AG04450 (cell line): ENCODE measurements at regions of chr17 and their contacts with region 1.

Region 1: DNA sequence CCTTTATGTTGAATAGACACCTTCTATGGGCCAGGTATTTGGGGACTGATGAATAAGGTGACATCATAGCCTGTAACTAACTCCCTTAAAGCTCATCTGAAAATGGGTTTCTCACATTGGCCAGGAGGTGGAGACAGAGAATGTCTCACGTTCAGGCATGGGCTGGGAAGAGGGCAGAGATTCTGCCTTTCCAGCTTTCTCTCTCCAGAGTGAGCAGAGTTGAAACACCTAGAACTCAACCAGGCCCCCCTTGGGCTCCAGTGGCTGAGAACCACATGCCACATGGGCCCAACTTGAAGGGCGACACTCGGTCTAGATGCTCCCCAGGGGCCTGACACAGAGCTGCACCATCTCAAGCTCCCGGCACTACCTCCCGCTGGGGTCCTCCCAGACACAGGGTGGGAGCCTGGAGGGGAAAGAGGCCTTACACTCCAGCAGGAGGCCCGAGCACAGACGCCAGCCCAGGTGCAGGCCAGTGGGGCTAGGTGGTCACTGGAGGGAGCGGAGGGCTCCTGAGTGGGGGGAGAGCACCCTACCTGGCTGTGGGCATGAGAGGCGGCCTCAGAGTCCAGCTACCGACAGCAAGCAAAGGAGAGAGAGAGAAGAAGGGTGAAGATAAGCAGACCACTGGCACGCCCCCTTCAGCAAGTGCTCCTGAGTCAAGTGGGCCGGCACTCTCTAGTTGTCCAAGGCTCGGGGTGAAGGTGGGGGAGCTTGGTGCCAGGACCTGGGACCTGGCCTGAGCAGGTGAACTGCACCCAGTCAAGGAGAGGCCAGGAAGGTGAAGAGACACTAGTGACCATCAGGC is 55.9 kb downstream of the MYO18A start:
- DNase-seq: no peak
- H3K4me3 ChIP-seq: no peak overlapping the region
- H3K27ac ChIP-seq: peak overlapping the region; percentile 31
- H3K27me3 ChIP-seq: no peaks in the 10 kb centered on the region
- CTCF ChIP-seq: peak; percentile 83

Region 2: GRCh38 chr17:29074488-29074887 is 49.8 kb before region 1 on chr17:
- CTCF ChIA-PET with region 1: no interaction called
- POLR2A ChIA-PET with region 1: no interaction called
- DNase-seq: no peak
- H3K4me3 ChIP-seq: no peak overlapping the region
- H3K27ac ChIP-seq: no peak overlapping the region
- H3K27me3 ChIP-seq: peaks cover 11% of the 10 kb centered on the region
- CTCF ChIP-seq: no peak

Region 3: DNA sequence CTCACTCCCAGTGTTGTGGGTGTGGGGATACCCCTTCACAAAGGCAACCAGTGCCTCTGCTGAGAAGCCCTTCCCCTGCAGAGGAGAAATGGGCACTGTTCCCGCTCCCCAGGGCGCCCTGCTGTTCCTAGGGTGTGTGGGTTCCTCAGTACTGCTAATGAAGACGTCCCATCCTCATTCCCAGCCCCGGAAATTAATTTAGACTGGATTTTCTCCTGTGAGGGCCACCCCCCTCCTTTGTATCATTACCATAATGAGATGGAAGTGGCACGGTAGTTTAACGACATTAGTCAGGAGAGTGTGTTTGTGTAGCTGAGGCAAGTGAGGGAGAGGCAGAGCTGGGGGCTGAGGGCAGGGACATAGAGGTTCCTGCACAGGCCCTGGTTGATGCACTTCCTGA is 28.2 kb before region 1 on chr17:
- CTCF ChIA-PET with region 1: no interaction called
- POLR2A ChIA-PET with region 1: no interaction called
- DNase-seq: no peak
- H3K4me3 ChIP-seq: no peak overlapping the region
- H3K27ac ChIP-seq: no peak overlapping the region
- H3K27me3 ChIP-seq: no peaks in the 10 kb centered on the region
- CTCF ChIP-seq: no peak

Region 4: DNA sequence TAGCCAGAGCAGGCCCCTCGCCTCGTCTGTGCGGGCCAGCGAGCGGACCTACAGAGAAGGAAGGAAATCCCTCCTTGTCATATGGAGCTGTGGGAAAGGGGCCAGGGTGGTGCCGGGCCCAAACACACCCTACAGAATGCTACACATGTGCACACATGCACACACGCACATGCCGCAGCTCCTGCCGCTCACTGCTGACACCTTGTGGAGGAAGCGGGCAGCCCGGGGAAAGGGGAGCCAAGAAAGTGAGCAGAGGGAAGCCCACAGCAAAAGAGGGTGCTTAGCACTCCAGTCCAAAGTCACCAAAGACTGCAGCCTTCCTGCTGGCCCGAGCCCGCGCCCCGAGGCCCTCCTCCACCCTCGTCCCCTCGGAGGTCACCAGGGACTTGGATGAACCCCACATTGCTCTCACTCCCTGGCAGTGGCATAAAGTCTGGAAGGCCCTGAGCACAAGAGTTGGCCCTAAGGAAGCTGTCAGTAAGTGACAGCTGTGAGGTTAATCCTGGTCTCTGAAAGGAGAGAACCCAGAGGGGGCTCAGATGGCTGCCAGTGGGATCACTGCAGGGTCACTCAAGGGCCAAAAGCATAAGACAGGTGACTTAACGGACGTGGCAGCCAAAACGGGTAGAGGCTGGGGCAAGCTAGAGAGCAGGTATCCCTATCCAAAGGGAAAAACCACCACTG is 12.4 kb before region 1 on chr17:
- CTCF ChIA-PET with region 1: interaction called, 14 read pairs
- POLR2A ChIA-PET with region 1: no interaction called
- DNase-seq: no peak
- H3K4me3 ChIP-seq: no peak overlapping the region
- H3K27ac ChIP-seq: no peak overlapping the region
- H3K27me3 ChIP-seq: no peaks in the 10 kb centered on the region
- CTCF ChIP-seq: peak; percentile 99

Region 5: GRCh38 chr17:29140051-29140621 is 15.8 kb after region 1 on chr17:
- CTCF ChIA-PET with region 1: interaction called, 66 read pairs
- POLR2A ChIA-PET with region 1: interaction called, 9 read pairs
- DNase-seq: no peak
- H3K4me3 ChIP-seq: peak overlapping the region; percentile 53
- H3K27ac ChIP-seq: peak overlapping the region; percentile 70
- H3K27me3 ChIP-seq: no peaks in the 10 kb centered on the region
- CTCF ChIP-seq: no peak

Region 6: DNA sequence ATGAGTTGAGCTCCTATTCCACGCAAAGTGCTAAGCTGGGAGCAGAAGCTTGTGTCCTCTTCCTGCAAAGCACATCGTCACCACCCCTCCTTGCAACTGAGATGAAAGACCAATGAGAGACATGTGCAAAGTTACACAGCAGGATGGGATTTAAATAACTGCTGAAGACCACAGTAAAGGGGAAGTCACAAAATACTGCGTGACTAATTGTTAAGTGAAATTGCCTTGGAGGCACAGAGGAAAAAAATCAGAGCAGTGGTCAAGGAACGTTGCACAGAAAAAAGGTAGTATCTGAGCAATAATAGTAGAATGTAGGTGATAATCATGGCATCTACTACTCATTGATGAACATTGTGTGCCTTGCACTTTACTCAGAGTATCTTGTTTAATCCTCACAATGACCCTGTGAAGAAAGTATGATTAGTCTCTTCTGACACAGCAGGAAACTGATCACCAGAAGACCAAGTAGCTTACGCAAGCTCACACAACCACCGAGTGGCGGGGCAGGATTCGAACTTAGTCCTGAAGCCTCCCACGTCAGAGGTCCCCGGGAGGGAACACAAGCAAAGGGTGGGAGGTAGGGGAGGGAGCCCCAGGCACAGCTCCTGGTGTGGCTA is 71.3 kb after region 1 on chr17:
- CTCF ChIA-PET with region 1: no interaction called
- POLR2A ChIA-PET with region 1: no interaction called
- DNase-seq: no peak
- H3K4me3 ChIP-seq: no peak overlapping the region
- H3K27ac ChIP-seq: no peak overlapping the region
- H3K27me3 ChIP-seq: peaks cover 14% of the 10 kb centered on the region
- CTCF ChIP-seq: no peak

Region 7: DNA sequence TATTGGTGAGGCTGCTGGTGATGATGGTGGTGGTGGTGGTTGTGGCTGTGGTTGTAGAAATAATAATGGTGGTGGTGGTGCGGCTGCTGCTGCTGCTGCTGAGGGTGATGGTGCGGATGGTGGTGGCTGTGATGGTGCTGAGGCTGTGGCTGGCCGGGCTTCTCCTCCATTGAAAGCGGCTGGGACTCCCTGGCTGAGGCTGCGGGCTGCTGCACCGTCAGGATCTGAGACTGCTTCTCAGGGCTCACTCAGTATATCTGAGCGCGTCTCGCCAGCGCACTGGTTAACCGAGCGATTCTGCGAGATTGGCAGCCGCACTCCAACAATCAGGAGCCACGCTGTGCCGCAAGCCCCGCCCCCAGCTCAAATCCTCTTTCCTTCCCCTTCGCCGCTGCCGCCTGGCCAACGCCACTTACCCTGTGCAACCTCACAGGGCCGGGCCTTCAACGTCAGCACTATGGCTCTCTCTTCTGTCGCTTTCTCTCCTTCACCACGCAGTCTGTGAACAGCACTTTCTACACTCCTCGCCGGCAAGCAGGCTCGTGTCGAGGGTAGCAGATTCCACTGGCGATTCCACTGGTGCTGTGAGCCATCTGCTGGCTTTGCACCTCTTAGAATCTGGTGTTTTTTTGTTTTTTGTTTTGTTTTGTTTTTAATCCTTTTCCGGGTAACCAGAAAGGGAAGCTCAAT is 169.7 kb after region 1 on chr17 and contains the start of gene NUFIP2:
- CTCF ChIA-PET with region 1: interaction called, 31 read pairs
- POLR2A ChIA-PET with region 1: interaction called, 9 read pairs
- DNase-seq: peak; percentile 97
- H3K4me3 ChIP-seq: peak within 1 kb of the TSS; percentile 98
- H3K27ac ChIP-seq: peak within 1 kb of the TSS; percentile 97
- H3K27me3 ChIP-seq: no peaks in the 10 kb centered on the region
- CTCF ChIP-seq: 0 out of 2 replicates have a peak, but pooled peaks have one; percentile 4
- polyA plus RNA-seq, gene NUFIP2: 13.6 and 14.7 TPM in 2 replicates